ENCODE measurements at regions of chr1 and their contacts with region 1.

Region 1: DNA sequence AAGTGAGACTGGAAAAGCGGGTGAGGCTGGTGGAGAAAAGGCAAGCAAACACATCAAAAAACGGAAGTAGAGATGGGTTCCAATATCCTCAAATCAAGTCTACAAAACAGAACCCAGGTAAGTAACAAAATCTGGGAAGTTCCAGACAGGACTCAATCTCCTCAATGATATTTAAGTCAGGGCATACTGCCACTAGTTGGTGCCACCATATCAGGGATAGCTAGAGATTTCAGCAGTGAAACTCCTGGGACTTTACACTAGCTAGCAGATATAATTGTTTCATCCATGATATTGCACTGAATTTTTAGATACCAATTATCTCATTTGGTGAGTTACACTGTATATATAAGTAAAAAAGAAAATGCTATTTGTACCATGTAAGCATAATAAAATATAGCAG is 52.0 kb downstream of the EYA3 start:
- DNase-seq: no peak
- ATAC-seq: no peak
- H3K4me3 ChIP-seq: no peak overlapping the region
- H3K27ac ChIP-seq: no peak overlapping the region
- H3K4me1 ChIP-seq: peaks cover 5% of the 10 kb centered on the region
- H3K27me3 ChIP-seq: no peaks in the 10 kb centered on the region
- CTCF ChIP-seq: no peak
- POLR2A ChIP-seq: no peak
- RAD21 ChIP-seq: no peak

Region 2: GRCh38 chr1:28067523-28068090 is 31.2 kb after region 1 on chr1:
- CTCF ChIA-PET with region 1: no interaction called
- POLR2A ChIA-PET with region 1: no interaction called
- dilution Hi-C with region 1: no loop called
- in situ Hi-C with region 1: no loop called
- intact Hi-C with region 1: loop called (anchors 5 kb)
- DNase-seq: peak; percentile 57
- ATAC-seq: peak; percentile 73
- H3K4me3 ChIP-seq: no peak overlapping the region
- H3K27ac ChIP-seq: no peak overlapping the region
- H3K4me1 ChIP-seq: peaks cover 3% of the 10 kb centered on the region; the same call in 1 of the 2 replicates
- H3K27me3 ChIP-seq: no peaks in the 10 kb centered on the region
- CTCF ChIP-seq: no peak
- POLR2A ChIP-seq: no peak
- RAD21 ChIP-seq: no peak

Measured in IMR-90 (cell line).